Activated CD4-positive, alpha-beta T cell treated with anti-CD3 and anti-CD28 coated beads for 36 hours (primary cell): ENCODE measurements at regions of chr2 and their contacts with region 1.

Region 1: DNA sequence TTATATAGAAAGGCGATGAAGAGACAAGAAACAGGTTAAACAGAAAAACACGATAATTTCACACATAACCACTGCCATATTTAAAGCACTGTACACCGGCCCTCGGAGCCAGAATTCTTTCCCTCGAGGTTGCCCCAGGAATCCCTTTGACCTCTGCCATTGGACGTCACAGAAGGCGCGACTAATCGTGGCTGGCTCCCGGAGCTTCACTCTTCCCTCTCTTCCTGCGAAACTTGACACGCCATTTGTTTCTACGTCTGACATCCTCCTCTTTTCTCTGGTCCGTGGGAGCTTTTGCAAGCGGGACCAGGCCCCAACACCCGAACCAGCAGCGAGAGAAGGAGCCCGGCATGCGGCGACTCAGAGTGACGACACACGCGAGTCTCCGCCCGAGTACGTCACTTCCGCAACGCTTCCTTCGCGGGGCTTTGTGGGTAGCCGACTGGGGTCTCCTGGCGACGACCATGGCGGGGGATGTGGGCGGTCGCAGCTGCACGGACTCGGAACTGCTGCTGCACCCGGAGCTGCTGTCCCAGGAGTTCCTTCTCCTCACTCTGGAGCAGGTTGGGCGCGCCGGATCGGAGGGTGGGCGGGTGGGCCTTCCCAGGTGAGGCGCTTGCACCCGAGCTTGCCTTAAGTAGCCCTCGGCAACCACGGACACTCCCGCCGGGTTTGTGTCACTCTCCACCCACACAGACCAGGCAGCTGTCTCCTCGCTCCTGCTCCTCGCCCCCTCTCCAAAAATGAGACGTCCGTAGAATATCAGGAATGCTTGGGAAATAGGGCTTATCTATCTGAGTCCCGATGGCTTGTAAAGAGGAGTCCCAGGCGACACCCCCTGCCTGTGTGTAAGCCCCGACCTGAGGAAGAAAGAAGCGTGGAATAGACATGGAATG is at the start of gene C2orf49:
- DNase-seq: peak; percentile 94
- ATAC-seq: peak; percentile 93
- H3K4me3 Mint-ChIP-seq: peak within 1 kb of the TSS; percentile 91
- H3K27ac Mint-ChIP-seq: peak within 1 kb of the TSS; percentile 100
- H3K4me1 Mint-ChIP-seq: peaks cover 27% of the 10 kb centered on the region
- H3K27me3 Mint-ChIP-seq: no peaks in the 10 kb centered on the region
- total RNA-seq, gene C2orf49: 19.3 to 27.8 TPM

Region 2: DNA sequence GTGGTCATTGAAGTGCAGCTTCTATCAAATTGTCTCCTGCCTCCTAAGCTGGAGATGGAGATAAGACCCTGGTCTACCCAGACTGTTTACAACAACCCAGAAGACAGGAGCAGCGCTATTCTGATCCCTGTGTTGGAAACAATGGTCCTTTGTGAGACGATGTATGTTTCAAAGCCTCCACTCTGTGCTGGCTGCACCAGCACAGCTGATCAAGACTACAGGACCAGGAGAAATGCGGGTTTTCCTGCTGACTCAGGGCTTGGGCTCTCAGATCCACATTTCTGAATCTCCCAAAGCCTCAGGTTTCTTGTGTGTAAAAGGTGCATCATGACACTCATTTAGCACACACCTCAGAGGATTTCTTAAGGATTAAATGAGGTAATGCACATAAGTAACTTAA is 391.5 kb before region 1 on chr2:
- CTCF ChIA-PET with region 1: no interaction called
- POLR2A ChIA-PET with region 1: no interaction called
- intact Hi-C with region 1: no loop called
- DNase-seq: no peak
- ATAC-seq: no peak
- H3K4me3 Mint-ChIP-seq: no peak overlapping the region
- H3K27ac Mint-ChIP-seq: no peak overlapping the region
- H3K4me1 Mint-ChIP-seq: no peaks in the 10 kb centered on the region
- H3K27me3 Mint-ChIP-seq: peaks cover 12% of the 10 kb centered on the region

Region 3: DNA sequence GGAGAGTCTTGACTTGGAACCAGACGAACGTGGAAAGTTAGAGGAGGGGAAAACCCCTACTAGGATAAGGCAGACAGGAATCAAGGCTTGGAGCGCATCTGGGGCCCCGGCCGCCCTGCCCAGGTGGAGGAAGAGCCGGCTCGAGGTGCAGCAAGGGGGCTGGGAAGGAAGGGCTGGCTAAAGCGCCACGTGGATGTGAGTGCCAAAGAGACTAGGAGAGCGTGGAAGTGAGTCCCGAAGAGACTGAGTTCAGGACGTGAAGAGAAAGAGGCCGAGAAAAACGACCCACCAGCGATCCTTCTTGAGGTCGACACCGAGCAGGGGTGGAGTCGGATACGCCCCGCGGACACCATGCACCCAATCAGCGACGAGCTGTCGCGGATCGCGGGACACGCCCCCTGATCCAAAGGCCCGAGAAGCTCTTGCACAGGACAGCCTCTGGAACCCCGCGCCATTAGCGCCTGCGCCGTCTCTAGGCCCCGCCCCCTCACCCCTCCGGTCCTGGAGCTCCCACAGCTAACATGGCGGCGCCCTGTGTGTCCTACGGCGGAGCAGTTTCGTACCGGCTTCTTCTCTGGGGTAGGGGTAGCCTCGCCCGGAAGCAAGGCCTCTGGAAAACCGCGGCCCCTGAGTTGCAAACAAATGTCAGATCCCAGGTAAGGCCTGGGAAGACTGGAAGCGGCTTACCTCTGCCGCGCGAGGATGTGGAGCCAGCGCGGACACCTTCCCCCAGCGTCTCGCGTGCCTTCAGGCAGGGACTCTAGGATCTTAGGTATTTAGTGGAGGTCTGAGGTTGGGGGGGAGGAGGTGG is 299.6 kb before region 1 on chr2 and contains the start of gene MRPS9:
- CTCF ChIA-PET with region 1: no interaction called
- POLR2A ChIA-PET with region 1: no interaction called
- intact Hi-C with region 1: loop called in 1 of 2 experiments (anchors 5 kb)
- DNase-seq: peak; percentile 99
- ATAC-seq: peak; percentile 99
- H3K4me3 Mint-ChIP-seq: peak within 1 kb of the TSS; percentile 86
- H3K27ac Mint-ChIP-seq: peak within 1 kb of the TSS; percentile 94
- H3K4me1 Mint-ChIP-seq: peaks cover 28% of the 10 kb centered on the region
- H3K27me3 Mint-ChIP-seq: no peaks in the 10 kb centered on the region
- total RNA-seq, gene MRPS9: 41.0 to 46.0 TPM

Region 4: DNA sequence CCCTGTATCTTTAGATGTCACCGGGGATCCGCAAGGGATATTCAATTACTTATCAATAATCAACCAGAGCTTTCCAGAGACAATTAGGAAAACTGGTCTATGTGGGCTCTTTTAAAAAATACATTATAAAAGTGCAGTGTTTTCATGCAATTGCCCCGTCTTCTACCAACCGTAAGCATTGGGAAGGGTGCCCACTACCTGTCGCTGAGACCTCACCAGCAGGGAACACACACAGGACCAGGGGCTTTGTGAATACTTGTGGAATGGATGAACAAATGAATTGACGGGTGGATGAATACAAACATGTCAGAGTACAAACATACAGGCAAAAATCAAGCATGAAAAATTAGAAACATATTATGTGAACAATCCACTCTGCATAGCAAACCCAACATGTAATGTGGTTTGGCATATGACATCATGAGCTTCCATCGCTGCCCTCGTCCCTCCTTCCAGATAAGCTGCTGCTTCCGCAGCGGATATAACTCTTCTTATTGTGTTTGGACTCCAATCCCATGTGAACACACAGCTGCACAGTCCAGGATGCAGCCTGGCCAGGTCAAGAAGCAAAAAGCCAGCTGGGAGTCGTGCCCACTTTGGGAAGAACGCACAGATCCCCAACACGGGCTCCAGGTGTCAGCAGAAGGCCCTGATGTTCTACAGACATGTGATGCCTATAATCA is 56.1 kb after region 1 on chr2:
- CTCF ChIA-PET with region 1: no interaction called
- POLR2A ChIA-PET with region 1: no interaction called
- intact Hi-C with region 1: loop called in 1 of 2 experiments (anchors 1 kb)
- DNase-seq: no peak
- ATAC-seq: no peak
- H3K4me3 Mint-ChIP-seq: no peak overlapping the region
- H3K27ac Mint-ChIP-seq: no peak overlapping the region
- H3K4me1 Mint-ChIP-seq: peaks cover 13% of the 10 kb centered on the region
- H3K27me3 Mint-ChIP-seq: no peaks in the 10 kb centered on the region